Caki2 (cell line): ENCODE measurements at regions of chr2 and their contacts with region 1.

Region 1: GRCh38 chr2:121066526-121066925 is 218.5 kb downstream of the TFCP2L1 start:
- DNase-seq: no peak

Region 2: DNA sequence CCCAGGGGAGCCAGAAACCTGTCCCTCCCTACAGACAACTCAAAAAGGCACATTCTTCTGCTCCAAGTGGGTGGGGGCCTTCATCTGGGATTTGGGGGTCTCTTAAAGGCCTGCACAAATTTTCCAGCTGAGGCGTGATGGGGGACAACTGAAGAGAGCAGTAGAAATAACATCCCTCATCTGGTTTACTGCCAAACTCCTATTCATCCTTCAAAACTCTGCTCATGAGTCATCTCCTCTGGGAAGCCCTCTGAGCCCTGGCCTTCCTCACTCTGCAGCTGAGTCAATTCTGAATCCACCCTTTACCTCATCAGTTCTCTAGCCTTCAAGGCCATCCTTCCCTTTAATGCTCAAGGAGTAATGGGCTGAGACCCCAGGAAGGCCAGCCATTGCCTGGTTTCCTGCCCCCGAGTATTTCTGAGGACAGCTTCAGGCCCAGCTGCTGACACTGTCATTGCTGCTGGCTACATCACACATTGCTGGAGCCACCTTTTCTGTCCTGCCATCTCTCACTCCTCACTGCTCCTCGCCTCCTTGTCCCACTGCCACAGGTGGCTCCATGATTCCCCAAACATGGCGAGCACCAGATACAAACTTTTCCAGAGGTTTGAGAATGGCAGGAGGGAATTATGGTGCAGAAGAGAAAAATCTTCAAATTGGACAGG is 363.1 kb before region 1 on chr2:
- in situ Hi-C with region 1: loop called (anchors 10 kb)
- DNase-seq: peak; percentile 68

Region 3: GRCh38 chr2:121104721-121105141 is 38.2 kb after region 1 on chr2:
- in situ Hi-C with region 1: no loop called
- DNase-seq: peak; percentile 62